Left cardiac atrium (tissue), 4 donors: ENCODE measurements at regions of chr3 and their contacts with region 1.

Region 1: DNA sequence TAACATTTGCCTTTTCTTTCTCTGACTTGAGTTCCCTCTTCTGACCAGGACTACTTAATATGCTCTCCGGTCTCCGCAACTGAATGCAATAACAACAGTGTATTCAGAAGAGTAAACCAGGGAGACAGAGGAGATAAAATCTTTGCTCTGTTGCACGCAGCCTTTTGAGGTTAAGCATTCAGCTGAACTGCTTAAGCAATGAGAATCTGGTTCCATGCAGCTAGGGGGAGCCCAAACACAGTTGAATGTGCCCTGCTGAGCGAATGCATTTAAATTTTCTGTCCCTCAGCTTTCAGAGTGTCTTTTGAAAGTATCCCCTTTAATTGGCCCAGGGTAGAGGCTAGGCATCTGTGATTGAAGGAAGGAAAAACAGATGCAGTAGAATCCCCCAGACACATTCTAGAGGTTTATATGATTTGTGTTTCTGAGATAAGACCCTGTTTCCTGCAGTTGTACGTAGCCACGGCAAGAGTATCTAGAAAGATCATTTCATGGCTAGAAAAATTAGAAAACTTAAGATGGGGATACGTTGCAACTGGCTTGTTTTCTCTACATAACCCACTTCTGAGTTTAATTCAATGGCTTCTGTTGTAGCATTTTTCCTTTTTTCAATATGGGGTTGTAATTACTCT is 309.6 kb downstream of the TUSC7 start:
- DNase-seq: peak; percentile 42
- ATAC-seq: peak; percentile 82 to 84

Region 2: DNA sequence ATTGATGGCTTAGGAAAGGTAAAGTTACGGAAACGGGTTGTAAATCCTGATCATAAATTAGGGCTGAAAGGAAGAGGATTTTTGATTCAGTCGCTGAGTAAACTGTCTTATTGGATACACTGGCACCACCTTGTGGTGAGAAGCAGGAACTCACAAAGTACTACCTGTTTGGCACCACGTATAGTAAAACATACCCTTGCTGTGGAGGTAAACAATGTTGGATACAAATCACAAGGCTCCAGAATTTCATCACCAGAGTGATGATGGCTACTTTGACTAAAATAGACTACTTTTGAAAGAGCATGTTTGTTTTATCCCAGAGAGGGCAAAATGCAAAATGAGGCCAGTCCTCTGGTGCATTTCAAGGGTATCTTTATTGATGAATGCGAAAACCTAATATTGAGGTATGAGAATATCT is 1798.6 kb after region 1 on chr3:
- intact Hi-C with region 1: loop called in 1 of 2 experiments (anchors 10 kb)
- DNase-seq: peak; percentile 23
- ATAC-seq: peak; percentile 47 to 50